H1 (cell line): ENCODE measurements at regions of chr3 and their contacts with region 1.

Region 1: GRCh38 chr3:38542401-38543298 is 46.5 kb downstream of the EXOG start:
- DNase-seq: no peak
- H3K4me3 ChIP-seq: no peak overlapping the region
- H3K27ac ChIP-seq: no peak overlapping the region
- H3K4me1 ChIP-seq: no peaks in the 10 kb centered on the region; a peak in 1 of 7 replicates
- H3K27me3 ChIP-seq: no peaks in the 10 kb centered on the region
- CTCF ChIP-seq: no peak
- EP300 ChIP-seq: no peak
- POLR2A ChIP-seq: no peak
- RAD21 ChIP-seq: no peak

Region 2: GRCh38 chr3:38528457-38528856 is 14.2 kb before region 1 on chr3:
- CTCF ChIA-PET with region 1: interaction called, 15 read pairs
- POLR2A ChIA-PET with region 1: interaction called, 3 read pairs
- DNase-seq: no peak
- H3K4me3 ChIP-seq: no peak overlapping the region
- H3K27ac ChIP-seq: no peak overlapping the region
- H3K4me1 ChIP-seq: peaks cover 0 to 10% (median 4%) of the 10 kb centered on the region in 4 experiments; a peak in 4 of 7 replicates
- H3K27me3 ChIP-seq: no peaks in the 10 kb centered on the region
- CTCF ChIP-seq: peak; percentile 64 to 79 (median 64)
- EP300 ChIP-seq: no peak
- POLR2A ChIP-seq: no peak
- RAD21 ChIP-seq: peak; percentile 66 to 78